Adrenal gland (tissue), 19 donors: ENCODE measurements at regions of chr10 and their contacts with region 1.

Region 1: GRCh38 chr10:109883859-109884771 is 39.2 kb downstream of the XPNPEP1 start:
- DNase-seq: peak; percentile 67 to 92 (median 82)
- H3K4me3 ChIP-seq: no peak overlapping the region
- H3K27ac ChIP-seq: peak overlapping the region in 4 of 5 donors; percentile 41 to 72 (median 52)
- H3K4me1 ChIP-seq: peaks cover 5 to 7% of the 10 kb centered on the region in 2 donors
- H3K27me3 ChIP-seq: no peaks in the 10 kb centered on the region
- CTCF ChIP-seq: peak; percentile 88 to 99 (median 95)
- POLR2A ChIP-seq: no peak

Region 2: DNA sequence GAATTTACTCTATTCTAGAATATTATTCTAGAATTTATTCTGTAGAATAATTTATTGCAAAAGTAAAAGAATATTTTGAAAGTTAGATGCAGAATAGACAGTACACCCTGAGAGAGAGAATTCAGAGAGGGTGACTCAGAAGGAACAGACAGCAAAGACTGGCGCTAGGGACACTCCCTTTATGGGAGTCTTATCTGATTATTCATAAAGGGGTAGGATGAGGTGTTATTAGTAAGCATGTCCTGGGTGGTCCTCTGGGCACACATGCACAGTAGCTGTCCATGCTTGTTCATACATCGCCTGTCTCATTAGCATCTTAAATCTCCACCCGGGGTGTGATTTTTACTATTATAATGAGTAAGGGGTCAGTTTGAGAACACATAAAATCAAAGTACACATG is 60.9 kb before region 1 on chr10:
- intact Hi-C with region 1: no loop called
- DNase-seq: no peak
- H3K4me3 ChIP-seq: no peak overlapping the region
- H3K27ac ChIP-seq: no peak overlapping the region
- H3K4me1 ChIP-seq: no peaks in the 10 kb centered on the region
- H3K27me3 ChIP-seq: no peaks in the 10 kb centered on the region
- CTCF ChIP-seq: no peak
- POLR2A ChIP-seq: no peak

Region 3: GRCh38 chr10:110007701-110008517 is 123.8 kb after region 1 on chr10 and contains the start of gene ADD3:
- intact Hi-C with region 1: loop called (anchors 10 kb)
- DNase-seq: peak; percentile 89 to 95 (median 92)
- H3K4me3 ChIP-seq: peak within 1 kb of the TSS; percentile 36 to 96 (median 82)
- H3K27ac ChIP-seq: peak within 1 kb of the TSS in 4 of 5 donors; percentile 81 to 90 (median 86)
- H3K4me1 ChIP-seq: peaks cover 4 to 32% of the 10 kb centered on the region in 2 donors
- H3K27me3 ChIP-seq: no peaks in the 10 kb centered on the region
- CTCF ChIP-seq: no peak
- POLR2A ChIP-seq: peak; percentile 41 to 64
- total RNA-seq, gene ADD3: 20.9 to 122 (median 51.7) TPM

Region 4: DNA sequence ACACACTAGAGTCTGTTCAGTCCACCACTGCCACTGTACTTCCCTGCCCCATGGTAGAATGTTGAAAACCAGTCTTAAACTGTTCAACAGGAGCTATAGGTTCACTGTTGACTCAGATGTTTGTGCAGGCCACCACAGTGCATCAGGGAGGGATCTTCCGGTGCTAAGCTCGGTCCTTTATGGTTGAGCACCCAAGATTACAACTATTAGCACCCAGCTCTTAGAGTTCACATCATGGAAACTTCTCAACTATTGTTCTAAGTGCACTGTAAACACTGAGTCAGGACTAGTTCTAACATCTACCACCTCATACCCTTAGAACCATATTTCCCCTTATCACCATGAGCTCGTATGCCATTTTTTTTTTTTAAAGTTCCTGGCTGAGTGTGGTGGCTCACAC is 226.2 kb after region 1 on chr10:
- intact Hi-C with region 1: loop called (anchors 10 kb)
- DNase-seq: no peak
- H3K4me3 ChIP-seq: no peak overlapping the region
- H3K27ac ChIP-seq: no peak overlapping the region
- H3K4me1 ChIP-seq: no peaks in the 10 kb centered on the region
- H3K27me3 ChIP-seq: no peaks in the 10 kb centered on the region
- CTCF ChIP-seq: no peak
- POLR2A ChIP-seq: no peak

Region 5: GRCh38 chr10:110285501-110285900 is 401.4 kb after region 1 on chr10:
- intact Hi-C with region 1: loop called in 1 of 2 experiments (anchors 10 kb)
- DNase-seq: no peak
- H3K4me3 ChIP-seq: no peak overlapping the region
- H3K27ac ChIP-seq: no peak overlapping the region
- H3K4me1 ChIP-seq: peaks cover 0 to 16% of the 10 kb centered on the region in 2 donors
- H3K27me3 ChIP-seq: no peaks in the 10 kb centered on the region
- CTCF ChIP-seq: no peak
- POLR2A ChIP-seq: no peak